ENCODE measurements at regions of chr12 and their contacts with region 1.

Region 1: GRCh38 chr12:94074980-94075928 is 73.1 kb upstream of the PLXNC1 start:
- DNase-seq: peak; percentile 25
- CTCF ChIP-seq: peak; percentile 51

Region 2: GRCh38 chr12:93766796-93767523 is 308.3 kb before region 1 on chr12:
- in situ Hi-C with region 1: loop called (anchors 25 kb)
- DNase-seq: peak; percentile 57
- CTCF ChIP-seq: peak; percentile 10